A673 (cell line): ENCODE measurements at regions of chr1 and their contacts with region 1.

Region 1: GRCh38 chr1:151070474-151071276 is at the start of gene GABPB2:
- DNase-seq: peak; percentile 96
- H3K4me3 ChIP-seq: peak within 1 kb of the TSS; percentile 70
- H3K27ac ChIP-seq: peak within 1 kb of the TSS; percentile 94
- H3K4me1 ChIP-seq: peaks cover 8% of the 10 kb centered on the region
- H3K27me3 ChIP-seq: no peaks in the 10 kb centered on the region
- CTCF ChIP-seq: peak; percentile 93
- total RNA-seq, gene GABPB2: 11.1 and 12.5 TPM in 2 replicates

Region 2: GRCh38 chr1:150237746-150238145 is 832.9 kb before region 1 on chr1:
- CTCF ChIA-PET with region 1: no interaction called
- POLR2A ChIA-PET with region 1: no interaction called
- intact Hi-C with region 1: no loop called
- DNase-seq: no peak
- H3K4me3 ChIP-seq: no peak overlapping the region
- H3K27ac ChIP-seq: no peak overlapping the region
- H3K4me1 ChIP-seq: peaks cover 7% of the 10 kb centered on the region
- H3K27me3 ChIP-seq: no peaks in the 10 kb centered on the region
- CTCF ChIP-seq: no peak

Region 3: DNA sequence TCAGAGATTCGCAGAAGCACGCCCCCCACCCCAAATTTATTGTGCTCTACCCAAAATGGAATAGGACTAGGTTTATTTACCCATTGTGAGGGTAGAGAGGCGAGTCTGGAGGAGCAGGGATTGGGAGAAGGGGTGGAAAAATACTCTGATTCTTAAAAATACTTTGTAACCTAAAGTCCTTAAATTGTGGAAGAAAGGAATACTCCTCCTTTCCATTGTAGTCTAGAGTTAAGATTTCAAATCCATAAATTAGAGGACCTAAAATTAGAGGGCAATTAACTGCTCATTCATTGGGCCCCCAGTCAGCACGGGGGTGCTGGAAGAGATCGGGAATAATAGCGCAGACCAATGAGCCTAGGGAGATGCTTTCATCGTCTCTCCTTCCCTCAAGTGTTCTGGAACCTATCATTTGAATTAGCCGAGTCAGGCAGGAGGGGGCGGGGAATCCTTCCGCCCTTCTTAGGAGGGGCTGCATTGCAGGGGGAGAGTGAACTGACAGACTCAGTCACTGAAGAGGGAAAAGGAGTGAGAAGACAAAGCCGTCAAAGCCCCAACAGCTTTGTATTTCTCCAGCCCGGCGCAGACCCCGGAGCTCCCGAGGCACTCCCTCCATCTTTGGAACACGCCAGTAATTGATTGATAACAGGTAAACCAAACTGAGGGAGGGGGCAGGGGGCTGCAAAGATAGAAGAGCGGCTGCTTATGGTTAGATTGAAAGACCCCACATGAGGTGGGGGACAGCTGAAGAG is 10.6 kb before region 1 on chr1 and contains the start of gene MLLT11:
- CTCF ChIA-PET with region 1: interaction called, 6 read pairs
- POLR2A ChIA-PET with region 1: no interaction called
- intact Hi-C with region 1: loop called (anchors 1 kb)
- DNase-seq: peak; percentile 96
- H3K4me3 ChIP-seq: peak within 1 kb of the TSS; percentile 99
- H3K27ac ChIP-seq: peak within 1 kb of the TSS; percentile 95
- H3K4me1 ChIP-seq: peaks cover 23% of the 10 kb centered on the region
- H3K27me3 ChIP-seq: no peaks in the 10 kb centered on the region
- CTCF ChIP-seq: peak; percentile 7; the same call in 1 of the 2 replicates
- total RNA-seq, gene MLLT11: 91.9 and 108 TPM in 2 replicates

Region 4: GRCh38 chr1:151085953-151086559 is 15.4 kb after region 1 on chr1:
- CTCF ChIA-PET with region 1: no interaction called
- POLR2A ChIA-PET with region 1: interaction called, 15 read pairs
- intact Hi-C with region 1: no loop called
- DNase-seq: no peak
- H3K4me3 ChIP-seq: no peak overlapping the region
- H3K27ac ChIP-seq: peak overlapping the region; percentile 42
- H3K4me1 ChIP-seq: no peaks in the 10 kb centered on the region
- H3K27me3 ChIP-seq: no peaks in the 10 kb centered on the region
- CTCF ChIP-seq: no peak

Region 5: DNA sequence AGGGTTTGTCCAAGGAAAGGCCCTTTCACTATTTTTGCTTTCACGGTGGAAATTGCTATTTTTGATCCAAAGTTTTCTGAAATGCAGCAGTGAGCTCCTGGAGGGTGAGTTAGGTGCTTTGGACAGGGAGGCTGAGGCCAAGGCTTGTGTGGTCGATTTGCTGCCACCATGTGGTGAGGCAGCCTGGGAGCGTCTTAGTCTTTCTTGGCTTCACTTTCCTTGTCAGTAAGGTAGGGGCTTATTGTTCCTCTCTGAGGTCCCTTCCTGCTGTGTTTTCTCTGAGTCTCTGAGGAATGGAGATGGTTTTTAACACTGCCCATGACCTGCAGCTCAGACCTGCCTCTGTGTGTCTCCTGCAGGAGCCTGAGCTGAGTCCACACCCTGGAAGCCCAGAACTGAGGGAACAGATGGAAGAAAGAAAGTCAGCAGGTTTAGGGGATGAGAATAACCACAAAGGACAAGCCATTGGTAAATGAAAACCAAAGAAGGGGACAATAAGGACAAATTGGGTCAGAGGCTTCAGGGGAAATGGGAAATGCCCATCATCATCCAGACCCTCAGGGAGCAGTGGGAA is 943.1 kb after region 1 on chr1:
- CTCF ChIA-PET with region 1: no interaction called
- POLR2A ChIA-PET with region 1: no interaction called
- intact Hi-C with region 1: no loop called
- DNase-seq: peak; percentile 61
- H3K4me3 ChIP-seq: no peak overlapping the region
- H3K27ac ChIP-seq: no peak overlapping the region
- H3K4me1 ChIP-seq: no peaks in the 10 kb centered on the region
- H3K27me3 ChIP-seq: peaks cover 17% of the 10 kb centered on the region
- CTCF ChIP-seq: peak; percentile 81